SK-N-SH (cell line): ENCODE measurements at regions of chr2 and their contacts with region 1.

Region 1: DNA sequence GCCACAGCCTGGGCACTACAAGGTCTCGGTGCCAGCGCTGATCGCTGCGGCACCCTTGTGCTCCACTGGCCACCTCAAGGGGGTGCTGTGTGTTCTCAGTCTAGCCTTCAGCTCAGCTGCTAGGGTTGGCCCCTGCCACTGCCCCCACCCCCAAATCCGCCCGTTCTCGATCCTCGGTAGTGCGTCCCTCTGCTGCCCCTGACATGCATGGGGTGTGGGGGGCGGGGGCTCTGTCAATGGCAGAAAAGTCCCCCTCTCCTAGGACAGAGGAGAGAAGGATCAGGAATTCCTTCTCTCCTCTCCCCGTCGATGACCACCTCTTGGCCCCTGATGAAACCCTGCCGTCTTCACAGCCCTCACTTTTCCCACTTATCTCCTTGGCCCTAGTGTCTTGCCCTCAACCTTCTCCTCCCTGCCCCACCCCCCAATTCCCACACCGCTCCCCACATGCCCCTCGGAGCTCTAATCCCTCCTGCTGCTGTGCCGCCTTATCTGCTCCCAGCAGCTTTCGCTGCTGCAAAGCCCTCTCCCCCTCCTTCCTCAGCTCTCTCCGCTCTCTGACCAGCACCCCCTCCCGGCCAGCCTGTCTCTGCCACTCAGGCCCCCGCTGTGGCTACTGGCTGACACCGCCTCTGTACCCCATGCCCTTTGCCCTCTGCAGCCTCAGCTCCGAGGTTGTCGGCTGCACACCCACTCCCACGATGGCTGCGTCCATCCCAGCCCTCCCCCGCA is 4.3 kb upstream of the ASIC4 start:
- DNase-seq: peak; percentile 83
- H3K4me3 ChIP-seq: peak overlapping the region; percentile 36 to 46; a peak in 3 of 4 replicates
- H3K27ac ChIP-seq: peak overlapping the region in 1 of 2 experiments; percentile 96; a peak in 2 of 4 replicates
- H3K4me1 ChIP-seq: peaks cover 3 to 99% of the 10 kb centered on the region in 2 experiments; a peak in 2 of 4 replicates
- H3K27me3 ChIP-seq: peaks cover 21% of the 10 kb centered on the region
- CTCF ChIP-seq: peak; percentile 76
- EP300 ChIP-seq: peak in 1 of 2 experiments; percentile 13; a peak in 1 of 4 replicates
- RAD21 ChIP-seq: peak; percentile 77

Region 2: DNA sequence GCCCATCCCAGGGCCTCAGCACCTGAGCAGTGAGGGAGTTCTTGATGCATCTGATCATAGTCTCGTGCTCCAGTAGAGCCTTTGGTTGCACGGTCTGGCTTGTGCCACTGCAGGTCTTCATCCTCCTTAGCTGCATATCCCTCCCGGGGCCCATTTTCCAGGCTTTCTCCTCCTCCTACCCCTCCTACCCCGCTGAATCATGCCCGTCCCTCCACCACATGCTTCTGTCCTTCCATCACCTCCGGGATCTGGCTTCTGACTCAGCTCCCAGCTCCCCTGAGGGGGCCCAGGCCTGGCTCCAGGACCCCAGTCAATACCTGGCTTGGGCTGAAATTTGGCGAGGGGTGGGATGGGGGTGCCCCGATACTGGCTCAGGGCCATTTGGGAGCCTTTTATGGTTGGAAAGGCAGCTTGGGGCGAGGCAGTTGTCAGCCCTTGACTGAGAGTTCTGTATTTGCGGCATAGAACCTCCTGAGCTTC is 57.1 kb before region 1 on chr2:
- CTCF ChIA-PET with region 1: interaction called, 26 read pairs
- POLR2A ChIA-PET with region 1: interaction called, 8 read pairs
- DNase-seq: peak; percentile 63
- H3K4me3 ChIP-seq: no peak overlapping the region
- H3K27ac ChIP-seq: peak overlapping the region; percentile 90 to 98
- H3K4me1 ChIP-seq: peaks cover 29 to 35% of the 10 kb centered on the region in 2 experiments
- H3K27me3 ChIP-seq: no peaks in the 10 kb centered on the region
- CTCF ChIP-seq: no peak
- EP300 ChIP-seq: peak in 1 of 2 experiments; percentile 96; a peak in 2 of 4 replicates
- RAD21 ChIP-seq: no peak

Region 3: DNA sequence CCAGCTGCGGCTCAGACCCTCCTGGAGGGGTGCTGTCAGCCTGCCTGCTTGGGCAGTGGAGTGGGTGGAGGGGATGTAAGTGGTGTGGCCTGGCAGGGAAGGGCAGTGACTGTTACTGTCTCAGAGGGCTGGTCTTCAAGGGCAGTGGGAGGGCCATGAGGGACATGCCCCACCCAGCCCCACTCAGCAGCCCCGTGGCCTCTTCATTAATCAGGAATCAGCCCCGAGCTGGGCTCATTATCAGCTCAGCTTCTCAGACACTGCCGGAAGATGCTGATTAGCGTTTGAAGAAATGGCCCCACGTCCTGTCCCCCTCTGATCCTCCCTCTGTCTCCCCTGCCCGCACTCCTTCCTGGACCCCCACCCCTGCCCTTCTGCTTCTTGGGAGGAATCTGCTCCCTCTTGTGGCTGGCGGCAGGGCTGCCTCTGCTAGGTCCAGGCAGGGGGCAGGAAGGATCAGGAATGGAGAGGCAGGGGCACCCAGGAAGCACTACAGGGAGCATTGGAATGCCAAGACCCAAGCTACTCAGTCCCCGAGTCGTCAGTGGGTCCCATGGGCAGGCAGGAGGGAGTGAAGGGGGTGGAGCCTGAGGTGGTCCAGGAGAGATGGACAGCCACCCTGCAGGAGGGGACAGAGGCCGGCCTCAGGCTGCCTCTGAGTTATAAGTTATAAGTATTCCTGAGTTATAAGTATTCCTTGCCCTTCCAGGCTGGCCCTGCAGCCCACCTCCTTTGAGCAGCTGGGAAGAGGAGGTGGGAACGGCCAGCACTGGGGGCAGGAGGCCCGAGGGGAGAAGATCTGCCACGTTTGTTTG is 11.3 kb after region 1 on chr2:
- CTCF ChIA-PET with region 1: interaction called, 2,824 read pairs
- POLR2A ChIA-PET with region 1: interaction called, 210 read pairs
- DNase-seq: peak; percentile 91
- H3K4me3 ChIP-seq: peak overlapping the region; percentile 28 to 45
- H3K27ac ChIP-seq: peak overlapping the region in 1 of 2 experiments; percentile 90; a peak in 2 of 4 replicates
- H3K4me1 ChIP-seq: peaks cover 12 to 76% of the 10 kb centered on the region in 2 experiments; a peak in 1 of 4 replicates
- H3K27me3 ChIP-seq: 0 out of 2 replicates have a peak, but pooled peaks cover 7% of the 10 kb centered on the region
- CTCF ChIP-seq: peak; percentile 82
- EP300 ChIP-seq: no peak
- RAD21 ChIP-seq: peak; percentile 66

Region 4: DNA sequence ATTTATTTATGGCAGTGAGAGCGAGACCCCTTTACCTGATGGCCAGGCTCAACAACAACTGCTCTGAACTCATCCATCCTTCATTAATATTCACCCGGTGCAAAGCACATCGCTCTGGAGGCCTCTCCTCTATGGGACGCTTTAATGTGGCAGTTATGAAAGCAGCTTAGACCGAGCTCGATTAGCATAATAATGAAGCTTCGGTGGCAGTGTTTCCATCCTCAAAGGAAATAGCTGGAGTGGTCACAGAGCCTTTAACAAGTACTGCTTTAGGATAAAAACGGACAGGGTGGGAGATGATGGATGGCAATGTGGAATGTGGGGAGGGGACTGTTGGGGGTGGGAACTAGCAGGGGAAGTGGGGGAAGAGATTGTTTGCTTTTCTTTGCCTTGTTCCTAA is 361.4 kb after region 1 on chr2:
- CTCF ChIA-PET with region 1: no interaction called
- POLR2A ChIA-PET with region 1: no interaction called
- DNase-seq: no peak
- H3K4me3 ChIP-seq: no peak overlapping the region
- H3K27ac ChIP-seq: no peak overlapping the region
- H3K4me1 ChIP-seq: no peaks in the 10 kb centered on the region; a peak in 1 of 4 replicates
- H3K27me3 ChIP-seq: no peaks in the 10 kb centered on the region
- CTCF ChIP-seq: no peak
- EP300 ChIP-seq: no peak
- RAD21 ChIP-seq: no peak